ENCODE measurements at regions of chr17 and their contacts with region 1.

Region 1: DNA sequence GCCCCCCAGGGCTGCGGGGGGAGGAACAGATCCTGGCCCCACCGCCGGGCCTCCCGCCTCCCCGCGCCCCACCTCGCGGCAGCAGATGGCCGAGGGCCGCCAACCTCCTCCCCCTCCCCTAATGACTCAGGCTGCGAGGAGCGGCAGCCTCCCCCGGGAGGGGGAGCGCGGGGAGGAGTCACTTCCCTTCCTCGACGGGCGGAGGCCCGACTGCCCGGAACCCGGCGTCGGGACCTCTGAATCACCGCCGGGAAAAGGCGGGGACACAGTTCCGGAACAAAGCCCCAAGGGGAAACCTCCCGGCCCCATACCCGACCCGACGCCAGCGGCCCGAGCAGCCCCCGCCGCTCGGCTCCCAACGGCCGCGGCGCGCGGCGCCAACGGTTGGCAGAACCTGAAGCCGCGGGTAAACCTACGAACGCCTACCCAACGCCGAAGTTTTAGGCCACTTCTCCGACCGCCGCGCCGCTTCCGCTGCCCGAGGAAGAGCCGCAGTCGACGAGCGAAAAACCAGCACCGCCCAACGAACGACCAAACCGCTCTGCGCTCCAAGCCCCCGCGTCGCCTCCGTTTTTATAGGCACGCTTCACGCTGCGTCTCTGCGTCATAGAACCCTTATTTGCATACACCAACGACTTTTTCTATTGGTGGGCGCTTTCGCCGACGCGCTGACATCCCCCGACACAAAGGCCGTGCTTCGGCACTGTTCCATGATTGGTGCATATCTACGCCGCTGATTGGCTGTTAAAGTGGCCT is 5.2 kb upstream of the UNK start:
- DNase-seq: peak; percentile 95
- H3K4me3 ChIP-seq: peak overlapping the region; percentile 90 to 94
- H3K27ac ChIP-seq: peak overlapping the region; percentile 97
- H3K4me1 ChIP-seq: peaks cover 18 to 25% of the 10 kb centered on the region in 2 experiments
- H3K27me3 ChIP-seq: no peaks in the 10 kb centered on the region
- CTCF ChIP-seq: 0 out of 2 replicates have a peak, but pooled peaks have one; percentile 7
- EP300 ChIP-seq: 0 out of 4 replicates have a peak, but pooled peaks of 1 of the 2 experiments have one; percentile 23
- RAD21 ChIP-seq: no peak

Region 2: DNA sequence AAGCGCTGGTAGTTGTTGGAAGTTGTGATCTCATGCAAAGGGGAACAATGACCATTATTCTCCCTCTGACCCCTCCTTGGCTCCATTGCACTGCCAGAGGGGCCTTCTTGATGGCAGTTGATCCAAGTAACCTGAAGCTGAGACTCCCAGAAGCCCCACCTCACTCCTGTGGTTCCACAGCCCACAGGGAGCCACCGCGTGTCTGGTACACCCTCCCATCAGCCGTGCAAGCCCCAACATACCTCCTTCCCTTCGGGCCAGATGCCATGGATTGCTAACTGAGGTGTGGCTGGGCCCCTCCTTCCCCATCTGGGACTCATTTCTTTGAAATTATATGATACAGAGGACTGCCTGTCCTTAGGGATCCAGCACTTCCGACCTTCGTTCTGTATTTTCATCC is 94.5 kb before region 1 on chr17:
- CTCF ChIA-PET with region 1: no interaction called
- POLR2A ChIA-PET with region 1: no interaction called
- DNase-seq: no peak
- H3K4me3 ChIP-seq: no peak overlapping the region
- H3K27ac ChIP-seq: peak overlapping the region in 1 of 2 experiments; percentile 59; a peak in 2 of 4 replicates
- H3K4me1 ChIP-seq: peaks cover 6 to 48% of the 10 kb centered on the region in 2 experiments; a peak in 3 of 4 replicates
- H3K27me3 ChIP-seq: no peaks in the 10 kb centered on the region
- CTCF ChIP-seq: no peak
- EP300 ChIP-seq: no peak
- RAD21 ChIP-seq: no peak

Region 3: DNA sequence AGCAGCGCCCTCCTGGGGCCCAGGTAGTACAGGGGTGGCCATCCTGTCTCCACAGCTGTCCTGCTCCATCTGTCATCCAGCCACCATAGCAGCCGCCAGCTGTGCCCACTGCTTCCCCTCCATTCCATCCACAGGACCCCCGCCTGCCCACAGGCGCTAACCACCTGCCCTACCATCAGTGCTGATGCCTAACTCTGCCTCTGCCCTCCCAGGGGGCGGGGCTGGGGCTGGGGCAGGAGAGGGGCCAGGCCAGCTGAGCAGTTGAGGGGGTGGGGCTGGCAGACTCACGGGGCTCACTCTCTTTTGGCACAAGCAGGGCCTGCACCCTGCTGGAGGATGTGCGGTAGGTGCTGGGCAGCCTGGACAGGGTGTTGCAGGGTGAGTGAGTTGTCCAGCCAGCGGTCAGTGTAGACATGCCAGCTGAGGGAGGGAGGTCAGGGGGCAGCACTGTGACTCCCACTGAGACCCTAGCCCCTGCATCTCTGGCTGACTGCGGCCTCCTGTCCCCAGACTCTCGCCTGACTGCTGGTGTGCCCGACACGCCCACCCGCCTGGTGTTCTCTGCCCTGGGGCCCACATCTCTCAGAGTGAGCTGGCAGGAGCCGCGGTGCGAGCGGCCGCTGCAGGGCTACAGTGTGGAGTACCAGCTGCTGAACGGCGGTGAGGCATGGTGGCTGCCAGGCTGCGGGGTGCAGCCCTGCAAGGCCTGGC is 24.1 kb before region 1 on chr17:
- CTCF ChIA-PET with region 1: interaction called, 121 read pairs
- POLR2A ChIA-PET with region 1: interaction called, 161 read pairs
- DNase-seq: peak; percentile 79
- H3K4me3 ChIP-seq: no peak overlapping the region
- H3K27ac ChIP-seq: peak overlapping the region in 1 of 2 experiments; percentile 39; a peak in 2 of 4 replicates
- H3K4me1 ChIP-seq: peaks cover 0 to 32% of the 10 kb centered on the region in 2 experiments; a peak in 1 of 4 replicates
- H3K27me3 ChIP-seq: no peaks in the 10 kb centered on the region
- CTCF ChIP-seq: no peak
- EP300 ChIP-seq: no peak
- RAD21 ChIP-seq: no peak

Region 4: DNA sequence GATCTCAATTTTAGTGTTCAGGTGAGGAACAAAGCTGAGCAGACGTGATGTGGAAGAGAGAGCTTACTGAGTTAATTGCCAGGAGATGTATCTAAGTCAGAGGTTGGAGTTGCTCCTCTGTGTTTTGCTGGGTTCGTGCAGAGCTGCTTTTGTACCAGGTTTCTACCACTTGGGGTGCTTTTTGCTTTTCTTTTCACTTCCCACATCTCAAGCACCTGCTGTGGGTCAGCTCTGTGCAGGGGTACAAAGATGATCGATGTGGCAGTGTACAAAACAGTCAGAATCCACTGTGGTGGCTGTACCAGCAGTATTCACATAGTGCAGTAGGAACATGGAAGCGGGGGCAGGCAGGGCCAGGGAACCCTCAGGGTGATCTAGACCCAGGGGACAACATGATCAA is 20.0 kb after region 1 on chr17:
- CTCF ChIA-PET with region 1: interaction called, 19 read pairs
- POLR2A ChIA-PET with region 1: interaction called, 11 read pairs
- DNase-seq: no peak
- H3K4me3 ChIP-seq: no peak overlapping the region
- H3K27ac ChIP-seq: no peak overlapping the region
- H3K4me1 ChIP-seq: no peaks in the 10 kb centered on the region
- H3K27me3 ChIP-seq: no peaks in the 10 kb centered on the region
- CTCF ChIP-seq: no peak
- EP300 ChIP-seq: no peak
- RAD21 ChIP-seq: no peak

Region 5: GRCh38 chr17:75822119-75822799 is 42.9 kb after region 1 on chr17:
- CTCF ChIA-PET with region 1: interaction called, 120 read pairs
- POLR2A ChIA-PET with region 1: interaction called, 39 read pairs
- DNase-seq: peak; percentile 71
- H3K4me3 ChIP-seq: no peak overlapping the region
- H3K27ac ChIP-seq: peak overlapping the region in 1 of 2 experiments; percentile 57; a peak in 1 of 4 replicates
- H3K4me1 ChIP-seq: peaks cover 0 to 32% of the 10 kb centered on the region in 2 experiments; a peak in 1 of 4 replicates
- H3K27me3 ChIP-seq: no peaks in the 10 kb centered on the region
- CTCF ChIP-seq: no peak
- EP300 ChIP-seq: no peak
- RAD21 ChIP-seq: no peak

Region 6: GRCh38 chr17:75855310-75856081 is 76.1 kb after region 1 on chr17 and contains the start of gene WBP2:
- CTCF ChIA-PET with region 1: interaction called, 16 read pairs
- POLR2A ChIA-PET with region 1: interaction called, 14 read pairs
- DNase-seq: peak; percentile 97
- H3K4me3 ChIP-seq: peak within 1 kb of the TSS; percentile 72 to 83
- H3K27ac ChIP-seq: peak within 1 kb of the TSS; percentile 86 to 88
- H3K4me1 ChIP-seq: peaks cover 12 to 19% of the 10 kb centered on the region in 2 experiments; a peak in 3 of 4 replicates
- H3K27me3 ChIP-seq: no peaks in the 10 kb centered on the region
- CTCF ChIP-seq: peak; percentile 70
- EP300 ChIP-seq: no peak
- RAD21 ChIP-seq: no peak; the same call in none of the 2 replicates
- polyA plus RNA-seq, gene WBP2: 49.7 and 55.8 TPM in 2 replicates

Region 7: GRCh38 chr17:76027159-76027839 is 247.9 kb after region 1 on chr17 and contains the start of gene EVPL:
- CTCF ChIA-PET with region 1: no interaction called
- POLR2A ChIA-PET with region 1: no interaction called
- DNase-seq: no peak
- H3K4me3 ChIP-seq: no peak within 1 kb of the TSS
- H3K27ac ChIP-seq: no peak within 1 kb of the TSS
- H3K4me1 ChIP-seq: peaks cover 9 to 13% of the 10 kb centered on the region in 2 experiments; a peak in 3 of 4 replicates
- H3K27me3 ChIP-seq: no peaks in the 10 kb centered on the region
- CTCF ChIP-seq: no peak
- EP300 ChIP-seq: no peak
- RAD21 ChIP-seq: no peak
- polyA plus RNA-seq, gene EVPL: 0.15 and 0.23 TPM in 2 replicates